ENCODE measurements at regions of chr15 and their contacts with region 1.

Region 1: DNA sequence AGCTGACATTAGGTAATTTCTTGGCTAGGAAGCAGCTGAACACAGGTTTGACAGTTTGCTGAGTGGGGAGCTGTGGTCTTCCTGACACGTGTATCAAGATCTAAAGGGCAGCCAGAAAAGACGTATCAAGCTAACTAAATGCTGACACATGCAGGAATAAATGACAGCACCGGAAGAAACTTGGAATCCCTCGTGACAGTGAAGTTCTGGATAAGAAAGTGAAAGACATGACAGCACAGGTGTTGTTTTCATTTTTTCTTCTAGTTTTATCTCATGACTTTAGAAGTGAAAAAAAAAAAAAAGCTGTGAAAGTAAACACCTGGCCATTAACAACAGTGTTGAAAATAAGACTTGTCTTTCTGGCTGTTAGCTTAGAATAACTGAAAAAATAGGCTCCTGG is 48.7 kb downstream of the FGF7 start:
- DNase-seq: no peak
- H3K4me3 ChIP-seq: no peak overlapping the region
- H3K27ac ChIP-seq: no peak overlapping the region
- H3K4me1 ChIP-seq: no peaks in the 10 kb centered on the region
- H3K27me3 ChIP-seq: peaks cover 0 to 2% of the 10 kb centered on the region in 2 experiments
- CTCF ChIP-seq: no peak
- POLR2A ChIP-seq: no peak

Region 2: GRCh38 chr15:49460411-49460941 is 11.3 kb before region 1 on chr15:
- CTCF ChIA-PET with region 1: interaction called, 10 read pairs
- POLR2A ChIA-PET with region 1: no interaction called
- dilution Hi-C with region 1: no loop called
- intact Hi-C with region 1: no loop called
- DNase-seq: no peak
- H3K4me3 ChIP-seq: no peak overlapping the region
- H3K27ac ChIP-seq: no peak overlapping the region
- H3K4me1 ChIP-seq: no peaks in the 10 kb centered on the region
- H3K27me3 ChIP-seq: peaks cover 0 to 12% of the 10 kb centered on the region in 2 experiments
- CTCF ChIP-seq: no peak
- POLR2A ChIP-seq: no peak

Region 3: GRCh38 chr15:50003786-50004334 is 532.1 kb after region 1 on chr15:
- CTCF ChIA-PET with region 1: interaction called, 34 read pairs
- POLR2A ChIA-PET with region 1: no interaction called
- dilution Hi-C with region 1: no loop called
- intact Hi-C with region 1: loop called (anchors 1 kb)
- DNase-seq: peak; percentile 63
- H3K4me3 ChIP-seq: no peak overlapping the region
- H3K27ac ChIP-seq: no peak overlapping the region
- H3K4me1 ChIP-seq: no peaks in the 10 kb centered on the region
- H3K27me3 ChIP-seq: peaks cover 0 to 28% of the 10 kb centered on the region in 2 experiments
- CTCF ChIP-seq: peak; percentile 74 to 75
- POLR2A ChIP-seq: no peak

Region 4: DNA sequence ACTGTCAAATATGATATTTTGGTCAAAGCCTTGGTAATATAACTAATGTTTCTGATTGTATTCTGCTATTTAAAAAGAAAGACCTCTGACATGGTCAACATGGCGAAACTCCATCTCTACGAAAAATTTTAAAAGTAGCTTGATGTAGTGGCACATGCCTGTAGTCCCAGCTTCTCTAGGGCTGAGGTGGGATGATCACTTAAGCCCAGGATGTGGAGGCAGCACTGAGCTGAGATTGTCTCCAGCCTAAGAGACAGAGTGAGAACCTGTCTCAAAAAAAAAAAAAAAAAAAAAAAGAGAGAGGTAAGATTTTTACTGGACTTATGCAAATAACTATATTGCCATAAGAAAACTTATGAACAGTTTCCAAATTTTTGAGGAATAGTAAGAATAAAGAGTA is 679.7 kb after region 1 on chr15:
- CTCF ChIA-PET with region 1: no interaction called
- POLR2A ChIA-PET with region 1: interaction called, 11 read pairs
- dilution Hi-C with region 1: no loop called
- intact Hi-C with region 1: loop called (anchors 5 kb)
- DNase-seq: no peak
- H3K4me3 ChIP-seq: no peak overlapping the region
- H3K27ac ChIP-seq: no peak overlapping the region
- H3K4me1 ChIP-seq: no peaks in the 10 kb centered on the region
- H3K27me3 ChIP-seq: no peaks in the 10 kb centered on the region
- CTCF ChIP-seq: no peak
- POLR2A ChIP-seq: no peak